ENCODE measurements at regions of chr13 and their contacts with region 1.

Region 1: DNA sequence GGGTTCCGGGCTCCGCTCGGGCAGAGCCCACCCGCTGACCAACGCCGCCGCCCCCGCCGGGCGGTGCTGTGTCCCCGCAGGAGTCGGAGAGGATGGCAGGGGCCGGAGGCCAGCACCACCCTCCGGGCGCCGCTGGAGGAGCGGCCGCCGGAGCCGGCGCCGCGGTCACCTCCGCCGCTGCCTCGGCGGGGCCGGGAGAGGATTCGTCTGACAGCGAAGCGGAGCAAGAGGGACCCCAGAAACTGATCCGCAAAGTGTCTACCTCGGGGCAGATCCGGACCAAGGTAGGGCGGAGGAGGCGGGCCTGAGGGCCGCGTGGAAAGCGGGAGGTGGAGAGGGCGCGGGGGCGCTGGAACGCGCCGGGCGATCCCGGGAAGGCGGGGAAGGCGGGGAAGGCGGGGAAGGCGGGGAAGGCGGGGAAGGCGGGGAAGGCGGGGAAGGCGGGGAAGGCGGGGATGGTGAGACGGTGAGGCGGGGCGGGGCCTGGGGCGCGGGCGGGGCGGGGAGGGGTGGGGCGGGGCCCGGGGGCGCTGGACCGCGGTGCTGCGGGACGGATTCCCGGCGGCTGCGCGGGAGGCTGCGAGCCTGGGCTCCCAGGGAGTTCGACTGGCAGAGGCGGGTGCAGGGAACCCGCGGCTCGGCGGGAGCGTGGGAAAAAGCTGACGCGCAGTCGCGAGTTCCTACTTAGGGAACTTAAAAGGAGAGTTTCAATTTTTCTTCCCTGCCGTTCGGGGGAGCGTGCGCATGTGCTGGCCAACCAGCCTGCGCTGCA is 420 bp downstream of the DGKH start:
- DNase-seq: peak; percentile 80
- H3K4me3 ChIP-seq: peak overlapping the region; percentile 65 to 85 (median 85)
- H3K27ac ChIP-seq: peak overlapping the region; percentile 86
- H3K4me1 ChIP-seq: peaks cover 9% of the 10 kb centered on the region
- H3K27me3 ChIP-seq: no peaks in the 10 kb centered on the region
- CTCF ChIP-seq: peak in 1 of 2 donors; percentile 20

Region 2: DNA sequence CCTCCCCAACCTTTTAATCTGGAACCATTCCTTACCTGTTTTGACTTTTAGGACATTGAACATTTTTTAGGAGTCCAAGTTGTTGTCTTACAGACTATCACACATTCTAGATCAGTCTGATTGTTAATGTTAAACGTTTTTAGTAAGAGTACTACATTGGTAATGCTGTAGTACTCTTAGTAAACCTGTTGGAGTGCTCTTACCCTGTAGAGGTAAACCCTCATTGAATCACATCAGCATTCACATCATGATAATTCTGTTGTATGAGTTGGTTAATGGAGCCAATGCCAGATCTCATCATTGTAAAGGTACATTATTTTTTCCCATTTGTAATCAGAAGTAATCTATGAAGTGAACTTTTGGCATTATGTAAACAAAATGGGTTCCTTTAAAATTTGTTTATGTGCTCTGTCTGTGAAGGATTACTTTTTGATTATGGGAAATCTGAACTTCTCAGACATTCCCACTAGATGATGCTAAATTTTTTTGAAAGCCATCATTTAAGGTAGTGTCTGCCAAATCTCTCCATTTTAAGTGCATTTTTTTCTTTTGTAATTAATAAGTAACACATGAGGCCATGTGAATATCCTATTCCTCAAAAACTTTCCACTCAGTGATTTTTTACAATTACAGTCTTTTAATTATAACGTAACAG is 143.1 kb before region 1 on chr13:
- CTCF ChIA-PET with region 1: no interaction called
- dilution Hi-C with region 1: no loop called
- in situ Hi-C with region 1: loop called (anchors 5 to 10 kb)
- intact Hi-C with region 1: loop called (anchors 1 kb)
- DNase-seq: peak; percentile 45
- H3K4me3 ChIP-seq: no peak overlapping the region
- H3K27ac ChIP-seq: no peak overlapping the region
- H3K4me1 ChIP-seq: peaks cover 10% of the 10 kb centered on the region
- H3K27me3 ChIP-seq: no peaks in the 10 kb centered on the region
- CTCF ChIP-seq: peak; percentile 74 to 79

Region 3: DNA sequence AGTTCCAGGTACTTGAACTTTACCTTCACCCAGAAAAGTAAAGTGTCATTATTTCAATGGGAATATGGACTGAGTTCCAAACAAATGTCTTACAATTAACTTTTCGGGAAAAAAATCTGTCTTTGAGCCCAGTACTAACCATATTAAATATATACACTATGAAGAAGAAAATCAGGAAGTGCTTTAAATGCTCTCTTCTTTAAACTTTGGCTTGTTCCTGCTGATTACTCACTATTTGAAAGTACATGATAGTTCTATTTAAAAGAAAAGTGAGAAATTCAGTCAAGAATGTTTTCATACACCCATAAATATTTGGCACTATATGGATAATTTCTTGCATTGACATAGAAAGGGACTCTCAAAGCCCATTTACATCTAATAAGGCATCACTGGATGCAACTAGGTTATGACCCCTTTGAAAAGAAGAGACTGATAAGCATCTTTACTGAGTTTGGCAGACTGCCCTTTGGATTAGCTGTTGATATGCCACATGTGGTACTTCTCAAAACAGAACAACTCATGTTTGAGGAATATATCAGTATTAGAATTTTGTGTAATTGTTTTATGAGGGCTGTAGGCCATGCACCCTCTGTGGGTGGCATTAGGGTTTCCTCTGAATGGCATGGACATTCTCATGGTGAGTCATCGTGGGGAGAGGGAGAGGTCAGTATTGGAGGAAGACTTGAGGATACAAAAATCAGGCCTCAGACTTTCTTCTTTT is 62.9 kb before region 1 on chr13:
- CTCF ChIA-PET with region 1: no interaction called
- dilution Hi-C with region 1: no loop called
- in situ Hi-C with region 1: no loop called
- intact Hi-C with region 1: no loop called
- DNase-seq: peak; percentile 54
- H3K4me3 ChIP-seq: no peak overlapping the region
- H3K27ac ChIP-seq: no peak overlapping the region
- H3K4me1 ChIP-seq: peaks cover 16% of the 10 kb centered on the region
- H3K27me3 ChIP-seq: no peaks in the 10 kb centered on the region
- CTCF ChIP-seq: no peak